ENCODE measurements at regions of chr14 and their contacts with region 1.

Region 1: GRCh38 chr14:85516239-85517112 is 13.5 kb upstream of the FLRT2 start:
- DNase-seq: no peak
- H3K4me3 ChIP-seq: no peak overlapping the region
- H3K27ac ChIP-seq: no peak overlapping the region
- H3K4me1 ChIP-seq: no peaks in the 10 kb centered on the region
- H3K27me3 ChIP-seq: no peaks in the 10 kb centered on the region
- CTCF ChIP-seq: no peak
- POLR2A ChIP-seq: no peak

Region 2: DNA sequence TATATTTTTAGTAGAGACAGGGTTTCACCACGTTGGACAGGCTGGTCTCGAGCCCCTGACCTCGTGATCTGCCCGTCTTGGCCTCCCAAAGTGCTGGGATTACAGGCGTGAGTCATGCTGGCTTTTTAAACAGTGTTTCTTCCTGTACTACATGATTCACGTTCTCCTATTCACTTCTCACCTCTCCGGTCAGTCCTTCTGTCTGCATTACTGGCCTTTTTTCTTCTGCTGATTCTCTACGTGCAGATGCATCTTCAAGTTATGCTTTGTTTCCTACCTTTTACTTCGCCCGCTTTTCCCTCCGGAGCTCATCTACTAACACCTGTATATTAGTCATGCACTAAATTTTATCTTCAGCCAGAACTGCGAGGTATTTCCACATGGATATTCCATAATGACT is 282.7 kb before region 1 on chr14:
- intact Hi-C with region 1: loop called (anchors 5 kb)
- DNase-seq: no peak
- H3K4me3 ChIP-seq: no peak overlapping the region
- H3K27ac ChIP-seq: no peak overlapping the region
- H3K4me1 ChIP-seq: no peaks in the 10 kb centered on the region
- H3K27me3 ChIP-seq: no peaks in the 10 kb centered on the region
- CTCF ChIP-seq: no peak
- POLR2A ChIP-seq: no peak

Region 3: DNA sequence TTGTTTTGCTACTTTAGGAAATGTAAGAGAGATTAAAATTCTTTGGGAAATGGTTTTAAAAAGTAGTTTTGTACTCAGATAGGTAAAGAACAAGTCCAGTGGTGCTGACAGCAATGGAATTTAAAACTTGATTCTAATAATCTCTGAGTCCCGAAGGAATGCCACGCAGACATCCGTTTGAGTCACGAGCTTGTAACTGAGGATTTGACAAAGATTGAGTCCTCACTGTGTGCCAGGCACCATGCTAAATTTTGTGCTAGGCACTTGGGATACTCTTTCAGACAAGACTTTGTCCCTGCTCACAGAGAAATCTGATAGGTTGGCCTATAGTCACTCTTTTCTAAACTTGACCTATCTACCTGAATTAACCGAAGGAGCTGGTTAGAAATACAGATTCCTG is 26.1 kb after region 1 on chr14:
- intact Hi-C with region 1: no loop called
- DNase-seq: no peak
- H3K4me3 ChIP-seq: no peak overlapping the region
- H3K27ac ChIP-seq: no peak overlapping the region
- H3K4me1 ChIP-seq: no peaks in the 10 kb centered on the region
- H3K27me3 ChIP-seq: no peaks in the 10 kb centered on the region
- CTCF ChIP-seq: no peak
- POLR2A ChIP-seq: no peak

Region 4: GRCh38 chr14:85554106-85554505 is 37.6 kb after region 1 on chr14:
- intact Hi-C with region 1: no loop called
- DNase-seq: no peak
- H3K4me3 ChIP-seq: no peak overlapping the region
- H3K27ac ChIP-seq: no peak overlapping the region
- H3K4me1 ChIP-seq: no peaks in the 10 kb centered on the region
- H3K27me3 ChIP-seq: no peaks in the 10 kb centered on the region
- CTCF ChIP-seq: no peak
- POLR2A ChIP-seq: no peak

Measured in breast epithelium (tissue), 4 donors.